GM12878 (cell line): ENCODE measurements at regions of chr1 and their contacts with region 1.

Region 1: DNA sequence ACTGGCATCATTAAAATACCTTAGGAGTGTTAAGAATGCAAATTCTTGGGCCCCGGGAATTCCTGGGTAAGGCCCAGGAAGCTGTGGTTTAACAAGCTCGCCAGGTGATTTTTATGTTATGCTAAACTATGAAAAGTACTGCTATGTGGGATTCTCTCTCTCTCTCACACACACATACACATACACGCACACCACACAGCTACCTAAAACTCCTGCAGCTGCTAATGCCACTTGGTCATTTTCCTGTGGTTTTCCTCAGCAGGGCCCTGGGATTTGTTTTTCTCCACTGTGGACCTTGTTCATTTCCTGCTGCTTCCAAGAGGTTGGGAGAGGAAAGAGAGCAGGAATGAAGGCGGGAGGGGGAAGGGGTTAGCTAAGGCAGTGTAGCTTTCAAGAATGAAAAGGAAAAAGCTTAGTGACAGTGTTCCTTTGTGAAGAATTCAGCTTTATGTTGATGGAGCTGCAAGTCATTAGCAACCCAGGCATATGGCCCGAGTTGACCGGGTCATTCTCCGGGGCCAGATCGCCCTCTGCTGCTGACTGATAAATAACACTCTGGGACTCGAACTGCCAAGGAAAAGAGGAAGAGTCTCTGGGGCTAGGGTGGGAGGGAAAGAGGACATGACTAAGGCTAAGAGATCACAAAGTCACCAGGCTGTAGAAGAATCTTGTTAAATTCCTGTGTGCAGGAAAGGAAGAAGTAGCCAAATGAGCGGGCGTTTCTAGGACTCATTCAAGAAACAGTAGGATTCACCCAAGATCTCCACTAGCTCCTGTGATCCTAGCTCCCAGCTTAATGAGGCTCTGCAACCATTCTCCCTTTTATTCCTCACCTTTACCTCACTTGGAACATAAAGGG is 30.5 kb upstream of the LRIG2 start:
- DNase-seq: no peak
- ATAC-seq: peak; percentile 92
- H3K4me3 ChIP-seq: 0 out of 2 replicates have a peak overlapping the region, but pooled peaks have one; percentile 26
- H3K27ac ChIP-seq: peak overlapping the region; percentile 34; the same call in 1 of the 2 replicates
- H3K4me1 ChIP-seq: peaks cover 29% of the 10 kb centered on the region
- H3K27me3 ChIP-seq: no peaks in the 10 kb centered on the region
- CTCF ChIP-seq: peak; percentile 59 to 85 (median 66); a peak in 5 of 6 replicates
- EP300 ChIP-seq: no peak
- POLR2A ChIP-seq: no peak
- RAD21 ChIP-seq: peak; percentile 90

Region 2: DNA sequence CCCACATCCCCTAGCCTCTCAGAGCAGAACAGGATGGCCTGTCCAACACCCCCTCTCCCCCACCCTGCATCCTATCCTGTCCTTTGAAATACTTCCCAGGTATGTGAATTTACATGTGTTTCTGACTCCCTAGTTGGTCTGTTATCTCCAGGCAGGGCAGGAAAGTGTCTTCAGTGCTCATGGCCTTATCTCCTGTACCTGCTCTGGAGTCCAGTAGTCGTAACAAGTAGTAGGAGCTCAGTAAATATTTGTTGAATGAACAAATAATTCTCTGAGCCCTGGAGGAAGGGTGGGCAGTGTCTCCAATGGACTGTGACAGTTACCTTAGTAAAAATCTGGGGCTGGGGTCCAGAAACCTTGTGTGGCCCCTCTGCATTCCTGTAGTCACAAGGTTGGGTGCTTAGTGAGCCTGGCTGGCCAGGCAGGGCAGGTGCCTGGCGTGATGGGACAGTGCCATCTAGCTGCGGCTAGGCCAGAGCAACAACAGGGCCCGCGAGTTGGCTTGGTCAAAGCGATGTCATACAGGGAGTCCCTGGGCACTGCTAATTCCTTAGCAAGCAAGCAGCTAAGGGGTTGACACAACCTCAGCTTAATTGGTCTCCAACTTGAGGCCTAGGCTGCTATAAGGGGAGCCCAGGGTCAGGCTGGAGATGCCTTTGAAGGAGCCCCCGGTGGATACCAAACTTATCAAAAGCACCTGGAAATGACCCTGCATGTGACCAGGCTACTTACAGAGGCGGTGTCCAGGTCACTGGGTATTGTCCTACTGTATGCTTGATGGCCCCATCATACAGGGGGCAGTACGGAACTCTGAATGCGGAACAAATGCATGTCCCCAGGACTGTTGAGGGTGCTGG is 238.4 kb before region 1 on chr1:
- CTCF ChIA-PET with region 1: interaction called, 47 read pairs
- POLR2A ChIA-PET with region 1: no interaction called
- RAD21 ChIA-PET with region 1: interaction called, 4 read pairs
- SMC1A ChIA-PET with region 1: interaction called, 13 read pairs
- in situ Hi-C with region 1: loop called (anchors 5 kb)
- intact Hi-C with region 1: loop called (anchors 1 kb)
- DNase-seq: peak; percentile 4
- ATAC-seq: peak; percentile 99
- H3K4me3 ChIP-seq: no peak overlapping the region
- H3K27ac ChIP-seq: no peak overlapping the region
- H3K4me1 ChIP-seq: peaks cover 4% of the 10 kb centered on the region; the same call in 1 of the 2 replicates
- H3K27me3 ChIP-seq: peaks cover 0 to 4% of the 10 kb centered on the region in 2 experiments; a peak in 1 of 4 replicates
- CTCF ChIP-seq: peak; percentile 88 to 95 (median 89)
- EP300 ChIP-seq: no peak
- POLR2A ChIP-seq: no peak
- RAD21 ChIP-seq: peak; percentile 92

Region 3: GRCh38 chr1:112882271-112882744 is 160.2 kb before region 1 on chr1:
- CTCF ChIA-PET with region 1: interaction called, 196 read pairs
- POLR2A ChIA-PET with region 1: interaction called, 4 read pairs
- RAD21 ChIA-PET with region 1: interaction called, 105 read pairs
- SMC1A ChIA-PET with region 1: interaction called, 150 read pairs
- in situ Hi-C with region 1: loop called (anchors 5 kb)
- intact Hi-C with region 1: loop called (anchors 1 kb)
- DNase-seq: no peak
- ATAC-seq: no peak
- H3K4me3 ChIP-seq: no peak overlapping the region
- H3K27ac ChIP-seq: no peak overlapping the region
- H3K4me1 ChIP-seq: no peaks in the 10 kb centered on the region
- H3K27me3 ChIP-seq: no peaks in the 10 kb centered on the region; a peak in 1 of 4 replicates
- CTCF ChIP-seq: no peak
- EP300 ChIP-seq: no peak
- POLR2A ChIP-seq: no peak
- RAD21 ChIP-seq: no peak

Region 4: DNA sequence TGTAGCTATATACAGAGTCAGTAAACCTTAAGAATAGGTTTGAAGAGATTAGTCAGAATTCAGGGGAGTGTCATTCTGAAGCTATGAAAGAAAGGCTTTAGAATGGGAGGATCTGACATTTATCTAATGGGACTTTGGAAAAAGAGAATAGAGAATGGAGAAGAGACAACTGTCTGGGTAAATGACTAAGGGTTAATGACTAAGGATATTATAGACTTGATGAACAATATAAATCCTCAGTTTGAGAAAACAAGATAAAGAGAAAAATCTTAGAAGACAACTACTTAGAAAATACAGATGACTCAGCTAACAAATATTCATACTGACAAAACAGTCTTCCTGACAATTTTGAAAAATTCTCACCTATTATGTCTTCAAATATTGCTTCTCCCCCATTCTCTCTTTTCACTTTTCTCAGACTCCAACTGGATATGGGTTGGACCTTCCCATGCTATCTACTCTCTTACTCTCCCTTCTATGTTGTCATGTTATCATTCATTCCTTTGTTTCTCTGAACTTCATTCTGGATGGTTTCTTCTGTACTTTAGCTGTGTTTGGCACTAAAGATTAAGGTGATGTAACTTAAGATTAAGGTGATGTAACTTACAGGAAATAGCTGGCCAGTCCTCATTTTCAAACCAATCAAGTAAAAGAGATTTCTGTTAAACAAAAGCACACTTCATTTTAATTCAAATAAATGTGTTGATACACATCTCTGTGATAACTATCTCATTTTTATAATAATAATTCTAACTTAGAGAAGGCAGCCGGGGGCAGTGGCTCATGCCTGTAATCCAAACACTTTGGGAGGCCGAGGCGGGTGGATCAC is 106.8 kb before region 1 on chr1:
- CTCF ChIA-PET with region 1: interaction called, 51 read pairs
- POLR2A ChIA-PET with region 1: interaction called, 3 read pairs
- RAD21 ChIA-PET with region 1: interaction called, 33 read pairs
- SMC1A ChIA-PET with region 1: interaction called, 26 read pairs
- in situ Hi-C with region 1: no loop called
- intact Hi-C with region 1: no loop called
- DNase-seq: no peak
- ATAC-seq: no peak
- H3K4me3 ChIP-seq: no peak overlapping the region
- H3K27ac ChIP-seq: no peak overlapping the region
- H3K4me1 ChIP-seq: 0 out of 2 replicates have a peak, but pooled peaks cover 4% of the 10 kb centered on the region
- H3K27me3 ChIP-seq: no peaks in the 10 kb centered on the region
- CTCF ChIP-seq: no peak
- EP300 ChIP-seq: no peak
- POLR2A ChIP-seq: no peak
- RAD21 ChIP-seq: no peak

Region 5: GRCh38 chr1:112955781-112956543 is 86.6 kb before region 1 on chr1 and contains the start of gene SLC16A1:
- CTCF ChIA-PET with region 1: interaction called, 47 read pairs
- POLR2A ChIA-PET with region 1: interaction called, 6 read pairs
- RAD21 ChIA-PET with region 1: interaction called, 18 read pairs
- SMC1A ChIA-PET with region 1: interaction called, 13 read pairs
- in situ Hi-C with region 1: no loop called
- intact Hi-C with region 1: loop called (anchors 2 kb)
- DNase-seq: peak; percentile 66
- ATAC-seq: peak; percentile 81
- H3K4me3 ChIP-seq: peak within 1 kb of the TSS; percentile 82
- H3K27ac ChIP-seq: peak within 1 kb of the TSS; percentile 93
- H3K4me1 ChIP-seq: no peaks in the 10 kb centered on the region
- H3K27me3 ChIP-seq: no peaks in the 10 kb centered on the region
- CTCF ChIP-seq: peak; percentile 4 to 43 (median 22); a peak in 3 of 6 replicates
- EP300 ChIP-seq: no peak
- POLR2A ChIP-seq: peak; percentile 100
- RAD21 ChIP-seq: peak; percentile 24; the same call in 1 of the 2 replicates
- polyA plus RNA-seq, gene SLC16A1: 40.1 to 45.2 TPM

Region 6: DNA sequence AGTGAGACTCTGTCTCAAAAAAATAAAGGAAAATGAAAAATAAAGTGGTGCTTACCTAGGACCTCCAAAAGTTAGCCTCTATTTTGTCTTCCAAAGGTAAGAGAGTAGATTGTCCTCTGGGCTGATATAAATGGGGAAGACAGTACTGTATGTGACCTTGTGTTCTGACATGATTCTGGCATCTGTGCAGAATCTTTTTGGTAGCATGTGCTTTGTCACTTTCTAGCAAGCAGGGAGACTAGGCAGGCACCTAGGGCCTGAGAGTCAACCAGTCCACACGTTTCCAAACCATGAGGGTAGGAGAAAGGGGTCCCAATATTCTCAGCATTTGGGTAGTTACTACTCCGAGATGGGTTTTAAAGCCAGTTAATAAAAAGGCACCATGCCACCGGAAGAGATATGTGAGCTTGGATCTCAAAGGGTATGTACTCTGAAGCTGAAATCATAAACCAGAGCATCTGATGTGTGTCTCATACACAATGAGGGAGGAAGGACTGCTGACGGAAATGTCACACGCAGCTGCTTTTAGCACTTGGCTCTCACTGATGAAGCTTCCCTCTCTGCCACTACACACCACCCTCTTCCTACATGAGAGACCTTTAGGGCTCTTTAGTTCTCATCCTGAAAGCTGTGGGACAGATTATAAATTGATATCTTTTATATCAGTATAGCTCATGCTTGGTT is 59.5 kb before region 1 on chr1:
- CTCF ChIA-PET with region 1: interaction called, 8 read pairs
- POLR2A ChIA-PET with region 1: no interaction called
- RAD21 ChIA-PET with region 1: interaction called, 5 read pairs
- SMC1A ChIA-PET with region 1: interaction called, 23 read pairs
- in situ Hi-C with region 1: no loop called
- intact Hi-C with region 1: no loop called
- DNase-seq: peak; percentile 12
- ATAC-seq: peak; percentile 62
- H3K4me3 ChIP-seq: no peak overlapping the region
- H3K27ac ChIP-seq: no peak overlapping the region
- H3K4me1 ChIP-seq: peaks cover 10% of the 10 kb centered on the region
- H3K27me3 ChIP-seq: no peaks in the 10 kb centered on the region
- CTCF ChIP-seq: no peak
- EP300 ChIP-seq: no peak
- POLR2A ChIP-seq: no peak
- RAD21 ChIP-seq: no peak

Region 7: DNA sequence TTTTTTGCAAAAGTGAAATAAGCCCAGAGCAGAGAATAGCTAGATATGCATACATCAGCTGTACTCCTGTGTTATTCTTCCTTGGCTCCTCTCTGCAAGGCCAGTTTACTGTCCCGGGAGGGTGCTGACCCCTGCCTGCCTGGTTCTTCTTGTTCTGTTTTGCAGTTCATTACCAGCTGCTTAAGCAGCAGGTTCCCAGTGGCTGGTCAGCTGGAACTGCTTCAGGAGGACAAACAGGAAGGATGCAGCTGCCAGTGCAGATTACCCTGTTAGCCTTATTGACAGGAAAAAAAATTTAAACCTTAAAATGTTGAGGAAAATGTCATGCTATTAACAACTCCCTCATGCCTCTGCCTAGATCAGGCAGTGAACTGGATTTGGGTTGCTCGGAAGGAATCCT is 14.5 kb after region 1 on chr1:
- CTCF ChIA-PET with region 1: interaction called, 20 read pairs
- POLR2A ChIA-PET with region 1: interaction called, 5 read pairs
- RAD21 ChIA-PET with region 1: interaction called, 8 read pairs
- SMC1A ChIA-PET with region 1: interaction called, 8 read pairs
- in situ Hi-C with region 1: no loop called
- intact Hi-C with region 1: no loop called
- DNase-seq: no peak
- ATAC-seq: no peak; the same call in none of the 3 replicates
- H3K4me3 ChIP-seq: no peak overlapping the region
- H3K27ac ChIP-seq: no peak overlapping the region
- H3K4me1 ChIP-seq: no peaks in the 10 kb centered on the region
- H3K27me3 ChIP-seq: no peaks in the 10 kb centered on the region
- CTCF ChIP-seq: no peak
- EP300 ChIP-seq: no peak
- POLR2A ChIP-seq: no peak
- RAD21 ChIP-seq: no peak

Region 8: GRCh38 chr1:113166473-113166872 is 124.0 kb after region 1 on chr1:
- CTCF ChIA-PET with region 1: no interaction called
- POLR2A ChIA-PET with region 1: no interaction called
- RAD21 ChIA-PET with region 1: no interaction called
- SMC1A ChIA-PET with region 1: no interaction called
- in situ Hi-C with region 1: no loop called
- intact Hi-C with region 1: no loop called
- DNase-seq: no peak
- ATAC-seq: no peak
- H3K4me3 ChIP-seq: no peak overlapping the region
- H3K27ac ChIP-seq: no peak overlapping the region
- H3K4me1 ChIP-seq: peaks cover 8% of the 10 kb centered on the region; the same call in 1 of the 2 replicates
- H3K27me3 ChIP-seq: no peaks in the 10 kb centered on the region; a peak in 1 of 4 replicates
- CTCF ChIP-seq: no peak
- EP300 ChIP-seq: no peak
- POLR2A ChIP-seq: no peak
- RAD21 ChIP-seq: no peak

Region 9: GRCh38 chr1:113269168-113269963 is 226.9 kb after region 1 on chr1:
- CTCF ChIA-PET with region 1: no interaction called
- POLR2A ChIA-PET with region 1: no interaction called
- RAD21 ChIA-PET with region 1: no interaction called
- SMC1A ChIA-PET with region 1: no interaction called
- in situ Hi-C with region 1: no loop called
- intact Hi-C with region 1: no loop called
- DNase-seq: no peak
- ATAC-seq: no peak
- H3K4me3 ChIP-seq: no peak overlapping the region
- H3K27ac ChIP-seq: no peak overlapping the region
- H3K4me1 ChIP-seq: no peaks in the 10 kb centered on the region
- H3K27me3 ChIP-seq: no peaks in the 10 kb centered on the region; a peak in 2 of 4 replicates
- CTCF ChIP-seq: no peak
- EP300 ChIP-seq: no peak
- POLR2A ChIP-seq: no peak
- RAD21 ChIP-seq: no peak